GM12878 (cell line): ENCODE measurements at regions of chr5 and their contacts with region 1.

Region 1: DNA sequence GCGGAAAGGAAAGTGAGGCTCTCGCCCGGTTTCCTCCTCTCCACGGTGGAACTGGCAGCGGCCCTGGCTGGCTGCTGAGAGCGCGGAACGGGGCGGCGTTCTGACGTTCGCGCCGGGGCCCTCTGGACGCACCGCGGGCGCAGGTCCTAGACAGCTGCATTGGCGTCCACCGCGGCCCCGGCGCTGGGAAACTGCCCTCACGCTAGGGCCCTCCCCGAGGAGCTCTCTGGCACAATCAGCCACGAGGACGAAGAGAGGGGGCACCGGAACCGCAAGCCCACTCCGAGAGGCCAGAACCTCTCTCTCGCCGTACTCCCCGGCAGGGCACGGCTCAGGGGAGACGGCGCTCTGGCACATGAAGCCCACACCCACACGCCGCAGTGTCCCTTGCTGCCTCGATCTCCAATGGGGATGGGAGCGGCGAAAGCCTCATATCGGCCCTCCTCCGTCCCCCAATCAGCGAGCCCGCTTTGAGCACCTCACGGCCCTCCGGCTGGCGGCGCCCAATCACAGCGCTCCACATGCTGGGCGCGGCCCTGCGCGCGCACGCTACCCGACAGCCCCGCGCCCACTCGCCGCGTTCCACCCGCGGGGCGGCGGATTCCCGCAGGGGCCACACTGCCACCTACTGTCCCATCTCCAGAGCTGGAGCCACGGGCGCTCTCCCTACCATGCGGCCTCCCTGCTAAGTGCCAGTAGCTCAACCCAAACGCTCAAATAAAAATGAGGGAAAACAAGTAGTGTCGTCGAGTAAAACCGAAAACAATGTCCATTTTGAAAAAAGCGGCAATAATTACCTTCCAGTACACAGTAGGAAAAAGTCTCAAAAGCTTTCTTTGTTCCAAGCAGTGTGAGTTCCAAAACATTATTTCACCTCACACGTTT is 11.8 kb downstream of the MRPS27 start:
- DNase-seq: peak; percentile 94
- ATAC-seq: peak; percentile 95
- H3K4me3 ChIP-seq: peak overlapping the region; percentile 79
- H3K27ac ChIP-seq: peak overlapping the region; percentile 97
- H3K4me1 ChIP-seq: peaks cover 22% of the 10 kb centered on the region
- H3K27me3 ChIP-seq: no peaks in the 10 kb centered on the region
- CTCF ChIP-seq: peak; percentile 83 to 97 (median 84)
- EP300 ChIP-seq: no peak
- POLR2A ChIP-seq: peak; percentile 100
- RAD21 ChIP-seq: peak; percentile 79

Region 2: GRCh38 chr5:72138943-72139521 is 169.2 kb before region 1 on chr5:
- CTCF ChIA-PET with region 1: interaction called, 14 read pairs
- POLR2A ChIA-PET with region 1: interaction called, 4 read pairs
- RAD21 ChIA-PET with region 1: interaction called, 10 read pairs
- SMC1A ChIA-PET with region 1: interaction called, 9 read pairs
- in situ Hi-C with region 1: loop called (anchors 5 kb)
- intact Hi-C with region 1: loop called (anchors 1 kb)
- DNase-seq: peak; percentile 15
- ATAC-seq: peak; percentile 74
- H3K4me3 ChIP-seq: no peak overlapping the region
- H3K27ac ChIP-seq: no peak overlapping the region
- H3K4me1 ChIP-seq: peaks cover 6% of the 10 kb centered on the region; the same call in 1 of the 2 replicates
- H3K27me3 ChIP-seq: peaks cover 0 to 2% of the 10 kb centered on the region in 2 experiments; a peak in 1 of 4 replicates
- CTCF ChIP-seq: no peak
- EP300 ChIP-seq: no peak
- POLR2A ChIP-seq: no peak
- RAD21 ChIP-seq: no peak

Region 3: GRCh38 chr5:72268753-72269410 is 39.3 kb before region 1 on chr5:
- CTCF ChIA-PET with region 1: interaction called, 14 read pairs
- POLR2A ChIA-PET with region 1: interaction called, 3 read pairs
- RAD21 ChIA-PET with region 1: interaction called, 5 read pairs
- SMC1A ChIA-PET with region 1: interaction called, 5 read pairs
- in situ Hi-C with region 1: no loop called
- intact Hi-C with region 1: no loop called
- DNase-seq: no peak
- ATAC-seq: peak; percentile 90
- H3K4me3 ChIP-seq: no peak overlapping the region
- H3K27ac ChIP-seq: no peak overlapping the region
- H3K4me1 ChIP-seq: no peaks in the 10 kb centered on the region
- H3K27me3 ChIP-seq: no peaks in the 10 kb centered on the region
- CTCF ChIP-seq: peak; percentile 65 to 68 (median 67); a peak in 5 of 6 replicates
- EP300 ChIP-seq: no peak
- POLR2A ChIP-seq: no peak
- RAD21 ChIP-seq: peak; percentile 73

Region 4: DNA sequence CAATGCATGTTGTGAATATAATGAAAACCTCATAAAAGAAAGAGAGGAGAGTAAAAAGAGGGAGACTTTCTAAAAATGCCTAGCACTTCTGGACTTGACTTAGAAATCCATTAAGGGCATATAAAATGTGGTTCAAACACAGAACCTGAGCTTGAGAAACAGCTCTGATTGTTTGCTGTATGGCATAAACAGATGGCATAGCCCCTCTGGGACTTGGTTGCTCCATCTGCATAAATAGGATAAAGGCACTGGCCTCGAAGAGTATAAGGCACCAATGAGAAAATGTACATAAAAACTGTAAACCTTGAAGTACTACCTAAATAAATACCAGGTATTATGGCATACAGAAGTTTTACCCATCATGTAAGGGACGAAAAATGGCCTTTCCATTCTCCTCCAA is 12.0 kb before region 1 on chr5:
- CTCF ChIA-PET with region 1: interaction called, 20 read pairs
- POLR2A ChIA-PET with region 1: interaction called, 6 read pairs
- RAD21 ChIA-PET with region 1: interaction called, 29 read pairs
- SMC1A ChIA-PET with region 1: interaction called, 19 read pairs
- in situ Hi-C with region 1: no loop called
- intact Hi-C with region 1: no loop called
- DNase-seq: no peak
- ATAC-seq: no peak
- H3K4me3 ChIP-seq: peak overlapping the region; percentile 8; the same call in 1 of the 2 replicates
- H3K27ac ChIP-seq: peak overlapping the region; percentile 60
- H3K4me1 ChIP-seq: peaks cover 48% of the 10 kb centered on the region
- H3K27me3 ChIP-seq: no peaks in the 10 kb centered on the region
- CTCF ChIP-seq: no peak
- EP300 ChIP-seq: no peak
- POLR2A ChIP-seq: no peak
- RAD21 ChIP-seq: no peak